ENCODE measurements at regions of chr7 and their contacts with region 1.

Region 1: GRCh38 chr7:103296901-103297836 is at the start of gene PMPCB:
- DNase-seq: peak; percentile 92
- H3K4me3 Mint-ChIP-seq: peak within 1 kb of the TSS; percentile 92
- H3K27ac Mint-ChIP-seq: peak within 1 kb of the TSS; percentile 90
- H3K4me1 Mint-ChIP-seq: peaks cover 28% of the 10 kb centered on the region
- H3K27me3 Mint-ChIP-seq: peaks cover 10% of the 10 kb centered on the region
- total RNA-seq, gene PMPCB: 71.5 and 75.5 TPM in 2 replicates

Region 2: GRCh38 chr7:103134836-103135554 is 162.2 kb before region 1 on chr7:
- intact Hi-C with region 1: no loop called
- DNase-seq: no peak
- H3K4me3 Mint-ChIP-seq: no peak overlapping the region
- H3K27ac Mint-ChIP-seq: no peak overlapping the region
- H3K4me1 Mint-ChIP-seq: peaks cover 4% of the 10 kb centered on the region
- H3K27me3 Mint-ChIP-seq: no peaks in the 10 kb centered on the region

Region 3: DNA sequence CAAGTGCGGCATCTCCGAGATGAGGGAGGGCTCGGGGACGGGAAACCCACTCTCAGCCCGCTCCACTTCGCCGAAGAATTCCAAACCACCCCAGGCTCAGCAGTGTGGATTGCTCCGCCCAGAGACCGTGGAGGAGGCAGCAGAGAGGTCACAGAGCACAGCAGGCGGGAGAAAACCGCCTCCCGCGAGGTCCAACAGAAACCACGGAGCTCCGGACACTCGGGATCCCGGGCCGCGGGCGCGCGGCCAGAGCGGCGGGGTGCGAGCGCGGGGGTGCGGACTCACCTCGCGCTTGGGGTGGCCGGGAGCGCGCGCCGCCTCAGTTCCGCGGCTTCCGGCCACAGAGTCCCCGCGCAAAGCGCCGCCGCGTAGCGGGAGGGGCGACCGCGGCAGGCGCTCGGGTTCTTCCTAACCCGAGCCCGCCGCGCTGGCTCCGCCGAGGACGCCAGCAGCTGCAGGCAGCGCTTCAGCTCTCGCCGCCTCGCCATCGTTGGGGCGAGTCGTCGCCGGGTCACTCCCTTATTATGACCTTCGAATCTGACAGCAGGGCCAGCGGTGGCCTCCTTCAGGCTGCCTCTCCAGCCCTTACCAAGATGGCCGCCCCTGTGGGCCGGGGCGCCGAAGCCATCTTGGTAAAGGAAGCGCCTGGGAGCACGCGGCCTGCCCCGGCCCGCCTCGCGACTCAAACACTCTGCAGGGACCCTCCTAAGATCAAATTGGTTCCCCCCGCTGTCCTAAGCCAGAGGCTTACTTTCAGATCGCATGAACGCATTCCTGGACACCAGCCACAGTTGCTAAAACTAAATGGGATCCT is 148.0 kb before region 1 on chr7 and contains the start of gene NAPEPLD:
- intact Hi-C with region 1: loop called (anchors 1 kb)
- DNase-seq: peak; percentile 65
- H3K4me3 Mint-ChIP-seq: peak within 1 kb of the TSS; percentile 96
- H3K27ac Mint-ChIP-seq: peak within 1 kb of the TSS; percentile 97
- H3K4me1 Mint-ChIP-seq: peaks cover 54% of the 10 kb centered on the region
- H3K27me3 Mint-ChIP-seq: no peaks in the 10 kb centered on the region
- total RNA-seq, gene NAPEPLD: 7.8 and 8.1 TPM in 2 replicates

Region 4: GRCh38 chr7:103412151-103412550 is 115.0 kb after region 1 on chr7:
- intact Hi-C with region 1: loop called (anchors 1 kb)
- DNase-seq: no peak
- H3K4me3 Mint-ChIP-seq: no peak overlapping the region
- H3K27ac Mint-ChIP-seq: no peak overlapping the region
- H3K4me1 Mint-ChIP-seq: no peaks in the 10 kb centered on the region
- H3K27me3 Mint-ChIP-seq: peaks cover 24% of the 10 kb centered on the region

Region 5: GRCh38 chr7:103466814-103467213 is 169.6 kb after region 1 on chr7:
- intact Hi-C with region 1: no loop called
- DNase-seq: no peak
- H3K4me3 Mint-ChIP-seq: no peak overlapping the region
- H3K27ac Mint-ChIP-seq: no peak overlapping the region
- H3K4me1 Mint-ChIP-seq: no peaks in the 10 kb centered on the region
- H3K27me3 Mint-ChIP-seq: peaks cover 2% of the 10 kb centered on the region

Region 6: GRCh38 chr7:104156842-104157277 is 859.7 kb after region 1 on chr7:
- intact Hi-C with region 1: loop called (anchors 5 kb)
- DNase-seq: no peak
- H3K4me3 Mint-ChIP-seq: no peak overlapping the region
- H3K27ac Mint-ChIP-seq: no peak overlapping the region
- H3K4me1 Mint-ChIP-seq: no peaks in the 10 kb centered on the region
- H3K27me3 Mint-ChIP-seq: no peaks in the 10 kb centered on the region